ENCODE measurements at regions of chrX and their contacts with region 1.

Region 1: GRCh38 chrX:151396825-151397740 is at the start of gene VMA21:
- DNase-seq: peak; percentile 82
- ATAC-seq: peak; percentile 91
- H3K4me3 ChIP-seq: peak within 1 kb of the TSS; percentile 97
- H3K27ac ChIP-seq: peak within 1 kb of the TSS; percentile 87
- H3K4me1 ChIP-seq: peaks cover 2% of the 10 kb centered on the region; the same call in 1 of the 2 replicates
- H3K27me3 ChIP-seq: no peaks in the 10 kb centered on the region
- CTCF ChIP-seq: no peak
- POLR2A ChIP-seq: peak; percentile 32; the same call in 1 of the 2 replicates
- RAD21 ChIP-seq: no peak
- total RNA-seq, gene VMA21: 28.5 and 49.4 TPM in 2 replicates

Region 2: DNA sequence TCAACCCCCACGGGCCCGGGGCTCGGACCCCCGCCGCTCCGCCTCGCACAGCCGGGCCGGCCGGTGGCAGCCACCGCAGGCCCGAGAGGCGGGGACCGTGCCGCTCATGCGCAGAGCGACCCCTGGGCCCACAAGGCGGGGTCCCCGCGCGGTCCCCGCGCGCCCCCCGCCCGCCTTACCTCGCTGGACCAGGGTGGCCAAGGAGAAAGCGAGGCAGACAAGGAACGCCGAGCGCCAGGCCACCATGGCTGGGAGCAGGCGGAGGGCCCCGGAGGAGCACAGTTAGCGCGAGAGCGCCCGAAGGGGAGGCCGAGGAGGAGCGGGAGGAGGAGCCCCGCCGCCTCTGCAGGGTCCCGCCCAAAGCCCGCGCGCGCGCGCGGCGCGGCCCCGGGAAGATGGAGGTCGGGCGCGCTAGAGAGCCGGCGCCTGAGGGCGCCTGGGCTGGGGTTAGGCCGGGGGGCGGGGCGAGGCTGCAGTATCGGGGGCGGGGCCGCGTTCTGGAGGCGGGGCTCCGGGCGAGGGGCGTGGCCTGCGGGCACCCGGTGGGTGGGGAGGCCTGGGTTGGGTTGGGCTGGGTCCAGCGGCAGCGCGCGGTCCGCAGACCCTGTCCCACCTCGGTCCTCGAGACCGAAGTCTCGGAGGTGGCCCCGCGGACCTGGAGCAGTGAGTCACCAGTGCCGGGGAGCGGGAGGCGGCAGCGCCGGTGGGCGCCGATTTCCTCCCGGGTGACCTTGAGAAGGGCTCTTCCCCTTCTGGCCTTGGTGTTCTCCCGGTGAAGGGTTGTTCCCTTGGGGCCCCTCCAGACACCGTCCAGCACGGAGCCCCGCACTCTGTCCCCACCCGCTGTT is 498.5 kb before region 1 on chrX and contains the start of gene CD99L2:
- CTCF ChIA-PET with region 1: no interaction called
- POLR2A ChIA-PET with region 1: no interaction called
- dilution Hi-C with region 1: no loop called
- in situ Hi-C with region 1: no loop called
- intact Hi-C with region 1: loop called (anchors 2 kb)
- DNase-seq: peak; percentile 78
- ATAC-seq: peak; percentile 96
- H3K4me3 ChIP-seq: peak within 1 kb of the TSS; percentile 95
- H3K27ac ChIP-seq: peak within 1 kb of the TSS; percentile 66
- H3K4me1 ChIP-seq: no peaks in the 10 kb centered on the region
- H3K27me3 ChIP-seq: peaks cover under 1% of the 10 kb centered on the region; the same call in 1 of the 2 replicates
- CTCF ChIP-seq: no peak
- POLR2A ChIP-seq: peak; percentile 66; the same call in 1 of the 2 replicates
- RAD21 ChIP-seq: no peak
- total RNA-seq, gene CD99L2: 17.4 and 20.6 TPM in 2 replicates